ENCODE measurements at regions of chr10 and their contacts with region 1.

Region 1: DNA sequence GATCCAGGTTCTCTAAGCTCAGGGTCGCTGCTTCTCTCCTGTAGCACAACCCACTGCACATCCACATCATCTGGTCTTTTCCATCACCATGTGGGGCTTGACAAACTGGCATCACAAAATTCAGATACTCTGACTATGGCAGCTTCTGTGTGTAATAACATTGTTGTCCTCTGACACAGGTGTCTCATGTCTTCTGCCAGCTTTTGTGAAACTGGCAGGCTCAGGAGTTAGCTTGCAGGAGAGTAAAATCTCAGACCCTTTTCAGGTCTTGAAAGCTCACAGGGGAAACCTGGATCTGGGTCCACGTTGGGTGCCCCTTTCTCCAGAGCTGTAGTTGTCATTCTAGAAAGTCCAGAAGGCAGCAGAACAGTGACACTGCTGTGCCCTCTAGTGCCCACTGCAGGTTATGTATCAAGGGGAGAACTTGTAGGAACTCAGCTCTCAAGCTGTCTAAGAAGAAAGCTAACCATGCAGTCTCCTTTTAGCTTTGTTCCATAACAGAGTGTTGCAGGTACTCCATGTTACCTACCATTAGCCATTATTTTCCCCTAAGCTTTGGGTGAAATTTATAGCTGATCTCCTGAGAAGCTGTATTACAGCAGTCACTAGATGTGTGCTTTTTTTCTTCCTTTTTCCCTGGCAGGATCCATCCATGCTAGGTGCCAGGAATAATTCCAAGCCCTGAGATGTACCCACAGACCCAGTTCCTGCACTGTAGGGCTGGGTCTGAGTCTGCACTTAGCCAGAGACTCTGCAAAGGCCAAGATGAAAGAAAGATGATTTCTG is 102.7 kb downstream of the ZNF248 start:
- DNase-seq: peak; percentile 25 to 72
- ATAC-seq: peak; percentile 88 to 95
- H3K4me3 ChIP-seq: no peak overlapping the region
- H3K27ac ChIP-seq: peak overlapping the region; percentile 52 to 59
- H3K4me1 ChIP-seq: 0 out of 3 replicates have a peak, but pooled peaks cover 5% of the 10 kb centered on the region
- CTCF ChIP-seq: peak; percentile 59
- EP300 ChIP-seq: no peak
- POLR2A ChIP-seq: no peak
- RAD21 ChIP-seq: peak; percentile 80 to 83

Region 2: DNA sequence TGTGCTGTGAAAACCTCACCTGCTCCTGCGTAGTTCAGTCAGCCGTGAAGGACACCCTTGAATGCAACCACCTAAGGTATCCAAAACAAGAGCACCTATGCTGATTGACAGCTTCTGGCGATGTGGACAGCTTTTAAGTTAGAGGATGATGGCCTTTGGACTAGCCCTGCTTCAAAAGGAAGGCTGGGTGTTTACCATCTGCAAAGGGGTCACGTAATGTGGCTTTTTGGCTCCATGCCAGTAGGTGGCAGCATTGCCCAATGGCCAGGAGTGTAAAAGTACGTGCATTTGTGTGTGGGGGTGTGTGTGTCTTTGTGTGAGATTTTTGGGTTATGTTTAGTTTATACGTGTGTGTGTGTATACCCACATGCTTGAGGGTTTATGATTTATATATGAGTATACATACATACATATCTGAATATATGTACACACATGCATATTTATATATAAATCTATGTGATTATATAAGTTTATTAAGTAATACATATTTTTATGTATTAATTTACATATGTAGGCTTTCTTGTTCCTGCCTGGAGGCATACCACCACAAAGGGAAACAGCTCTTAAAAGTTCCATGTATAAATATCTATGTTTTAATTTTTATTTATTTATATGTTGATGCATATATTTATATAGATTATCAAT is 865.7 kb before region 1 on chr10:
- CTCF ChIA-PET with region 1: interaction called, 11 read pairs
- POLR2A ChIA-PET with region 1: no interaction called
- DNase-seq: peak; percentile 7 to 82
- ATAC-seq: peak; percentile 59 to 84; a peak in 5 of 6 replicates
- H3K4me3 ChIP-seq: no peak overlapping the region
- H3K27ac ChIP-seq: peak overlapping the region; percentile 7 to 58; a peak in 4 of 6 replicates
- H3K4me1 ChIP-seq: 0 out of 3 replicates have a peak, but pooled peaks cover 5% of the 10 kb centered on the region
- CTCF ChIP-seq: peak; percentile 74
- EP300 ChIP-seq: no peak
- POLR2A ChIP-seq: no peak
- RAD21 ChIP-seq: peak; percentile 86 to 92

Region 3: GRCh38 chr10:37434091-37434490 is 320.6 kb before region 1 on chr10:
- CTCF ChIA-PET with region 1: interaction called, 10 read pairs
- POLR2A ChIA-PET with region 1: no interaction called
- DNase-seq: peak in 1 of 2 experiments; percentile 70
- ATAC-seq: peak in 1 of 2 experiments; percentile 80; a peak in 3 of 6 replicates
- H3K4me3 ChIP-seq: no peak overlapping the region
- H3K27ac ChIP-seq: peak overlapping the region in 1 of 2 experiments; percentile 55; a peak in 1 of 6 replicates
- H3K4me1 ChIP-seq: 0 out of 3 replicates have a peak, but pooled peaks cover 4% of the 10 kb centered on the region
- CTCF ChIP-seq: peak; percentile 43
- EP300 ChIP-seq: no peak
- POLR2A ChIP-seq: no peak
- RAD21 ChIP-seq: peak; percentile 60 to 66